ENCODE measurements at regions of chr2 and their contacts with region 1.

Region 1: DNA sequence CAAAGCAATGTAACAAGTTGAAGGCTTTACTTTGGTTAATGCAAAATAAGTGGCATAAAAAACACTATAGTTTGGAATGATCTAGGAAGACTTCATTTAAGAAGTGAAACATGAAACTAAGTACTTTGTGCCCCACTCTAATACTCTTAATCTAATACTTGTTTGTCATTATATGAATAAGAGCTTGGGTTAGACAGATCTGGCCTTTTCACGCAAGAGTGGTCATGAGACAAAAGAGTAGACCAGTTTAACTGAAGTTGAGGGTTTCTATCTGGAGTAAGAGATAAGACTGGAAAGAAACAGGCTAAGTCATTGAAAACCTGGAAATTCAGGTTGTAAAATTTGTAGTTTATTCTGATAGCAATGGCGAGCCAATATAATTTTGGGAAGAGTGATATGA is 2.8 kb downstream of the SLC30A6 start:
- DNase-seq: peak; percentile 27 to 82 (median 40)
- ATAC-seq: peak; percentile 5; the same call in 1 of the 3 replicates
- H3K4me3 ChIP-seq: no peak overlapping the region
- H3K27ac ChIP-seq: peak overlapping the region; percentile 98
- H3K4me1 ChIP-seq: peaks cover 6 to 16% of the 10 kb centered on the region in 2 experiments; a peak in 4 of 5 replicates
- H3K27me3 ChIP-seq: no peaks in the 10 kb centered on the region
- CTCF ChIP-seq: no peak
- EP300 ChIP-seq: peak; percentile 88
- POLR2A ChIP-seq: 0 out of 2 replicates have a peak, but pooled peaks have one; percentile 31
- RAD21 ChIP-seq: no peak

Region 2: DNA sequence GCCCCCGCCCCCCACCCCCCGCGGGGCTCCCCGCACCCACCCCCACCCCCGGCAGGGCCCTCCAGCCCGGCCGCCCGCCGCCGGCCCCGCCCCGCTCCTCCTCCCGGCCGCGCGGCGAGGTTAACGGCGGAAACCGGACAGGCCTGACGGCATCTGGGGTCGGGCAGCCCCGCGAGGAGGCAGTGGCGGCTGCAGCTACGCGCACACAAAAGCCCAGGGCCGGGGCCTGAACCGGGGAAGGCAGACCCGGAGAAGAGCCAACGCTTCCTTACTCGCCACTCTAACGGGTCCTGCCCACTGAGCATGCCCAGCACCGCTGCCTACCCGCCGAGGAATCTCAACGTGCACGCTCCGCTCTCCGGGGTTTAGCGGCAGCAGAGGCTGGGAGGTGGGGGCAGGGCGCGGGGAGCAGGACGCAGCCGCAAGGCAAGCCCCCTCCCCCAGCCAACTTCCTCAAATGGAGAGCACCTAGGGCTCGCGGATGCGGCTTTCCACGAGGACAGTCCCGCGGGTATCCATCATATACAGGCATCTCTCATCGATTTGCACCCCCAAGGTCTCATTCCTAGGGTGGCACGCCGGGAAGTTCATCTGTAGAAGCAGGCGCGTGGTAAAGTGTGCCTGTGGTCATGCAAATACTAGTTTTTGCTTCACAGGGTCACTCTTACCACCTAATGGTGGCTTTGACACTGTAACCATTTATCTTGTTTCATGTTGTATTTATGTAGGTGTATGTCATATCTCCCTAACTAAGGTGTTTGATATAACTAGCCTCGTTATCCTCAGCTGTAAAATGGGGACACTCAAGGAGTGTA is 157.6 kb before region 1 on chr2 and contains the start of gene MEMO1:
- CTCF ChIA-PET with region 1: no interaction called
- POLR2A ChIA-PET with region 1: interaction called, 9 read pairs
- in situ Hi-C with region 1: no loop called
- intact Hi-C with region 1: loop called (anchors 5 kb)
- DNase-seq: peak; percentile 93 to 96 (median 94)
- ATAC-seq: peak; percentile 87
- H3K4me3 ChIP-seq: peak within 1 kb of the TSS; percentile 92
- H3K27ac ChIP-seq: peak within 1 kb of the TSS; percentile 95
- H3K4me1 ChIP-seq: peaks cover 18 to 31% of the 10 kb centered on the region in 2 experiments
- H3K27me3 ChIP-seq: no peaks in the 10 kb centered on the region
- CTCF ChIP-seq: peak in 2 of 3 experiments; percentile 2 to 6; a peak in 2 of 6 replicates
- EP300 ChIP-seq: no peak
- POLR2A ChIP-seq: peak; percentile 91
- RAD21 ChIP-seq: peak; percentile 13 to 19; a peak in 1 of 4 replicates
- polyA plus RNA-seq, gene MEMO1: 81.6 to 87.7 TPM

Region 3: GRCh38 chr2:32039447-32040219 is 128.9 kb before region 1 on chr2 and contains the start of gene DPY30:
- CTCF ChIA-PET with region 1: no interaction called
- POLR2A ChIA-PET with region 1: interaction called, 28 read pairs
- in situ Hi-C with region 1: no loop called
- intact Hi-C with region 1: no loop called
- DNase-seq: peak; percentile 89 to 97 (median 90)
- ATAC-seq: peak; percentile 93
- H3K4me3 ChIP-seq: peak within 1 kb of the TSS; percentile 73
- H3K27ac ChIP-seq: peak within 1 kb of the TSS; percentile 63
- H3K4me1 ChIP-seq: peaks cover 8 to 15% of the 10 kb centered on the region in 2 experiments; a peak in 2 of 5 replicates
- H3K27me3 ChIP-seq: no peaks in the 10 kb centered on the region
- CTCF ChIP-seq: 0 out of 6 replicates have a peak, but pooled peaks of 2 of the 3 experiments have one; percentile 3 to 19
- EP300 ChIP-seq: no peak
- POLR2A ChIP-seq: peak; percentile 98
- RAD21 ChIP-seq: 0 out of 4 replicates have a peak, but pooled peaks of 1 of the 2 experiments have one; percentile 17
- polyA plus RNA-seq, gene DPY30: 375 to 402 TPM

Region 4: DNA sequence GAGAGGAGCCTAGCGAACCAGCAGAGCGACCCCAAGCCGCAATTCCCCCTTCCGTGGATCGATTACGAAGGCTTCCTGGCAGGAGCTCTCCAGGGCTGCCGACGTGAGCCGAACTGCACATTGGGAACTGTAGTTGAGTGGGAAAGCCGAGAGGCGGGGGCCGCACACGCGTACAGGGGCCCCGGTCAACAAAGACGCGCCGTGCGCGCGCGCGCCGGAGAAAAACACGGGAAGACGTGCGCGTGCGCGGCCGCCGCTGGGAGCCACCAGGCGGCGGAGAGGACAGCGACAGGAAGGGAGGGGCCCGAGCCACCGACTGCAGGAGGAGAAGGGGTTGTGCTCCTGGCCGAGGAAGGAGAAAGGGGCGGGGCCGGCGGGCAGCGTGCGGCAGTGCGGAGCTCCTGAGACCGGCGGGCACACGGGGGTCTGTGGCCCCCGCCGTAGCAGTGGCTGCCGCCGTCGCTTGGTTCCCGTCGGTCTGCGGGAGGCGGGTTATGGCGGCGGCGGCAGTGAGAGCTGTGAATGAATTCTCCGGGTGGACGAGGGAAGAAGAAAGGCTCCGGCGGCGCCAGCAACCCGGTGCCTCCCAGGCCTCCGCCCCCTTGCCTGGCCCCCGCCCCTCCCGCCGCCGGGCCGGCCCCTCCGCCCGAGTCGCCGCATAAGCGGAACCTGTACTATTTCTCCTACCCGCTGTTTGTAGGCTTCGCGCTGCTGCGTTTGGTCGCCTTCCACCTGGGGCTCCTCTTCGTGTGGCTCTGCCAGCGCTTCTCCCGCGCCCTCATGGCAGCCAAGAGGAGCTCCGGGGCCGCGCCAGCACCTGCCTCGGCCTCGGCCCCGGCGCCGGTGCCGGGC is 105.0 kb before region 1 on chr2 and contains the start of gene SPAST:
- CTCF ChIA-PET with region 1: no interaction called
- POLR2A ChIA-PET with region 1: interaction called, 30 read pairs
- in situ Hi-C with region 1: no loop called
- intact Hi-C with region 1: loop called (anchors 1 kb)
- DNase-seq: peak; percentile 96 to 98 (median 96)
- ATAC-seq: peak; percentile 94
- H3K4me3 ChIP-seq: peak within 1 kb of the TSS; percentile 96
- H3K27ac ChIP-seq: peak within 1 kb of the TSS; percentile 89
- H3K4me1 ChIP-seq: peaks cover 3 to 38% of the 10 kb centered on the region in 2 experiments; a peak in 4 of 5 replicates
- H3K27me3 ChIP-seq: no peaks in the 10 kb centered on the region
- CTCF ChIP-seq: peak; percentile 46 to 69 (median 53); a peak in 5 of 6 replicates
- EP300 ChIP-seq: peak; percentile 14; the same call in 1 of the 2 replicates
- POLR2A ChIP-seq: peak; percentile 81
- RAD21 ChIP-seq: peak in 1 of 2 experiments; percentile 20; a peak in 1 of 4 replicates
- polyA plus RNA-seq, gene SPAST: 7.4 to 12.6 TPM

Region 5: DNA sequence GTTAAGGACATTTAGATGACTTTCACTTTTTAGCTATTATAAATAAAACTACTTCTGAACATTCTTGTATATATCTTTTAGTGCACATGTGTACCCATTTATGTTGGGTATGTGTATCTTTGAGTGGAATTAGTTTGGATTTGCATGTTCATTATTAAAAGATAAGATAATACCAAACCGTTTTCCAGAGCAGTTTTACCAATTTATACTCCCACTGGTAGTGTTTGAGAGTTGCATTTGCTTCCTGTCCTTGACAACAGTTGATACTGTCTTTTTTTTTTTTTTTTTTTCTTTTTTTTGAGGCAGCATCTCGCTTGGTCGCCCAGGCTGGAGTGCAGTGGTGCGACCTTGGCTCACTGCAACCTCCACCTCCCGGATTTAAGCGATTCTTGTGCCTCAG is 20.5 kb after region 1 on chr2:
- CTCF ChIA-PET with region 1: no interaction called
- POLR2A ChIA-PET with region 1: interaction called, 10 read pairs
- in situ Hi-C with region 1: no loop called
- intact Hi-C with region 1: no loop called
- DNase-seq: no peak
- ATAC-seq: no peak
- H3K4me3 ChIP-seq: no peak overlapping the region
- H3K27ac ChIP-seq: no peak overlapping the region
- H3K4me1 ChIP-seq: no peaks in the 10 kb centered on the region; a peak in 1 of 5 replicates
- H3K27me3 ChIP-seq: no peaks in the 10 kb centered on the region
- CTCF ChIP-seq: no peak
- EP300 ChIP-seq: no peak
- POLR2A ChIP-seq: no peak
- RAD21 ChIP-seq: no peak

Region 6: GRCh38 chr2:32356735-32357644 is 188.5 kb after region 1 on chr2 and contains the start of gene BIRC6:
- CTCF ChIA-PET with region 1: no interaction called
- POLR2A ChIA-PET with region 1: no interaction called
- in situ Hi-C with region 1: no loop called
- intact Hi-C with region 1: loop called (anchors 10 kb)
- DNase-seq: peak; percentile 95 to 98 (median 97)
- ATAC-seq: peak; percentile 91
- H3K4me3 ChIP-seq: peak within 1 kb of the TSS; percentile 87
- H3K27ac ChIP-seq: peak within 1 kb of the TSS; percentile 91
- H3K4me1 ChIP-seq: peaks cover 7 to 9% of the 10 kb centered on the region in 2 experiments; a peak in 4 of 5 replicates
- H3K27me3 ChIP-seq: no peaks in the 10 kb centered on the region
- CTCF ChIP-seq: peak in 1 of 3 experiments; percentile 13; a peak in 2 of 6 replicates
- EP300 ChIP-seq: peak; percentile 39
- POLR2A ChIP-seq: peak; percentile 95
- RAD21 ChIP-seq: no peak
- polyA plus RNA-seq, gene BIRC6: 18.8 to 30.7 TPM

Measured in K562 (cell line).